CD4-positive, alpha-beta memory T cell (primary cell): ENCODE measurements at regions of chr12 and their contacts with region 1.

Region 1: DNA sequence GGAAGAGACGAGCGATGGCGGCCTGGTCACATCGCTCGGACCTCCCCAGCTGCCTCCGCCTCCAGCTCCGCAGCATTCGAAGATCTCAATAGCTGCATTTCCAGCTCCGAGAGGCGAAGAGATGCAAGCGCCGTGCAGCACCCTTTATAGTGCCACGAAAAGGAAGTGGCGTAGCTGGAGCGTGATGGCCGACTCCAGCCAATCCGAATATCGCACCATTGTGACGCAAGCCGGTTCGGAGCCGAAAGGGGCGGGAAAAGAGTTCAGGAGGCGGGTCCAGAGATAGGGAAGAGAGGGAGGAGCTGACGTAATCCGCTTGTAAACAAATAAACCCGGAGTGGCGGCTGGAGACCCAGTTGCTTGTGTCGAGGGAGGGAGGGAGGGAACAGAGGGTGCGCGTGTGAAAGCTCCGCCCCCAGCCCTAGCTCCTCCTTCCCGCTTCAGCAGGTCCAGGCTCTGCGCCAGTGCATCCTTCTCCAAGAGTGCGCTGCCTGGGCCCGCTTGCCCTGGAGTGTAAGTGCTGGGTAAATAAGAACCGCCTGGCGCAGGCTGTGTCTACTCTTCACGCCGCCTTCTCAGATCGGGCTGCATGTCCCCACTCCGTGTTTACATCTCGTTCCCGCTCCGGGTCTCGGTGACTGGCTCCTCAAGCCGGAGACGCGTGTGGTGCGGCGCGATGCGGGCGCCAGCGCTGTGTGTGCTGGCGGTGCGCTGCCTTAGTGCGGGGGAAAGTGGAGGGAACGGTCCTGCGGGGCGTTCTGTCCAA is at the start of gene BTG1:
- DNase-seq: peak; percentile 99 to 100 (median 100)
- H3K4me3 ChIP-seq: peak within 1 kb of the TSS; percentile 89 to 96
- H3K4me3 Mint-ChIP-seq: peak within 1 kb of the TSS; percentile 92 to 100 (median 100)
- H3K27ac ChIP-seq: peak within 1 kb of the TSS; percentile 86
- H3K27ac Mint-ChIP-seq: peak within 1 kb of the TSS; percentile 95 to 100 (median 100)
- H3K4me1 ChIP-seq: peaks cover 23% of the 10 kb centered on the region
- H3K4me1 Mint-ChIP-seq: peaks cover 9 to 37% (median 21%) of the 10 kb centered on the region in 4 donors
- H3K27me3 ChIP-seq: no peaks in the 10 kb centered on the region
- H3K27me3 Mint-ChIP-seq: no peaks in the 10 kb centered on the region
- total RNA-seq, gene BTG1: 431 to 469 TPM

Region 2: GRCh38 chr12:91811481-91812287 is 334.2 kb before region 1 on chr12:
- CTCF ChIA-PET with region 1: interaction called, 44 read pairs
- POLR2A ChIA-PET with region 1: interaction called, 99 read pairs
- intact Hi-C with region 1: loop called (anchors 1 kb)
- DNase-seq: peak; percentile 64 to 73 (median 67)
- H3K4me3 ChIP-seq: no peak overlapping the region
- H3K4me3 Mint-ChIP-seq: peak overlapping the region in 5 of 8 donors; percentile 2 to 57 (median 44)
- H3K27ac ChIP-seq: no peak overlapping the region
- H3K27ac Mint-ChIP-seq: peak overlapping the region; percentile 7 to 92 (median 84)
- H3K4me1 ChIP-seq: peaks cover 8% of the 10 kb centered on the region
- H3K4me1 Mint-ChIP-seq: peaks cover 4 to 13% (median 12%) of the 10 kb centered on the region in 4 donors
- H3K27me3 ChIP-seq: no peaks in the 10 kb centered on the region
- H3K27me3 Mint-ChIP-seq: no peaks in the 10 kb centered on the region

Region 3: DNA sequence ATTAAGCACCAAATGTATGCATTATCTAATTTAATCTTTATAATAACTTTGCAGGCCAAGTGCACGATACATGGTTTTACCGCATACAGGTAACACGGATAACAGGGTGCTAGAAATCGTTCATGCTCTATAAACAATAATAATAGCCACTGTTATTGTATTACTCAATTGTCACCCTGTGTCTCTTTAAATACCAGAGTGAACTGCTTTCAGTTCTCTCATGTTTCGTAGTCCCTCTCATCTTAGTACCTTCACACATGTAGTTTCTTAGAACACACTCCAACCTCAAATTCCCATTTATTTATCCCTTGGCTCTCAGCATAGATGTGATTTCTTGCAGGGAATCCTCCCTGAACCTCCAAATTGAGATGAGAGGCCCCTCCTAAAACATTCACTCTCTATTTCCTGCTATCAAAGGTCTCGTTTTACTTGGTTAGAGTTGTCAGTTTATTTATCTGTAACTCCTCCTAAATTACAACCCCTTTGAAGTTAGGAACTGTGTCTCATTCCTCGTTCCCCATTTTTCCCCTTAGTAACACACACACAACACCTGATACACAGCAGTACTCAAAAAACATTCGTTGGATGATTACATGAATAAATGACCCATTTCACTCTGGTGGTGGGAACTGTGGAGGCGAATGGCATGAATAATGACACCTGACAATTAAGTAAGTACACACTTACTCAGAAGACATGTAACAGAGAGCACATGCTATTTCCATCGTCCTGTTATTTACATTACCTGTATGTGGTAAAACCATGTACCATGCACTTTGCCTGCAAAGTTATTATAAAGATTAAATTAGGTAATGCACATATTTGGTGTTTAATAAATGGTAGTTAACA is 134.8 kb before region 1 on chr12:
- CTCF ChIA-PET with region 1: interaction called, 16 read pairs
- POLR2A ChIA-PET with region 1: interaction called, 84 read pairs
- intact Hi-C with region 1: no loop called
- DNase-seq: no peak
- H3K4me3 ChIP-seq: no peak overlapping the region
- H3K4me3 Mint-ChIP-seq: peak overlapping the region; percentile 36 to 90 (median 80)
- H3K27ac ChIP-seq: peak overlapping the region; percentile 32
- H3K27ac Mint-ChIP-seq: peak overlapping the region; percentile 22 to 93 (median 85)
- H3K4me1 ChIP-seq: peaks cover 23% of the 10 kb centered on the region
- H3K4me1 Mint-ChIP-seq: peaks cover 31 to 51% (median 37%) of the 10 kb centered on the region in 4 donors
- H3K27me3 ChIP-seq: no peaks in the 10 kb centered on the region
- H3K27me3 Mint-ChIP-seq: no peaks in the 10 kb centered on the region

Region 4: GRCh38 chr12:92078167-92079053 is 67.5 kb before region 1 on chr12:
- CTCF ChIA-PET with region 1: no interaction called
- POLR2A ChIA-PET with region 1: interaction called, 17 read pairs
- intact Hi-C with region 1: no loop called
- DNase-seq: no peak
- H3K4me3 ChIP-seq: no peak overlapping the region
- H3K4me3 Mint-ChIP-seq: peak overlapping the region in 2 of 8 donors; percentile 7 to 20
- H3K27ac ChIP-seq: no peak overlapping the region
- H3K27ac Mint-ChIP-seq: peak overlapping the region in 4 of 7 donors; percentile 7 to 69 (median 56)
- H3K4me1 ChIP-seq: peaks cover 32% of the 10 kb centered on the region
- H3K4me1 Mint-ChIP-seq: peaks cover 36 to 73% (median 56%) of the 10 kb centered on the region in 4 donors
- H3K27me3 ChIP-seq: no peaks in the 10 kb centered on the region
- H3K27me3 Mint-ChIP-seq: no peaks in the 10 kb centered on the region

Region 5: DNA sequence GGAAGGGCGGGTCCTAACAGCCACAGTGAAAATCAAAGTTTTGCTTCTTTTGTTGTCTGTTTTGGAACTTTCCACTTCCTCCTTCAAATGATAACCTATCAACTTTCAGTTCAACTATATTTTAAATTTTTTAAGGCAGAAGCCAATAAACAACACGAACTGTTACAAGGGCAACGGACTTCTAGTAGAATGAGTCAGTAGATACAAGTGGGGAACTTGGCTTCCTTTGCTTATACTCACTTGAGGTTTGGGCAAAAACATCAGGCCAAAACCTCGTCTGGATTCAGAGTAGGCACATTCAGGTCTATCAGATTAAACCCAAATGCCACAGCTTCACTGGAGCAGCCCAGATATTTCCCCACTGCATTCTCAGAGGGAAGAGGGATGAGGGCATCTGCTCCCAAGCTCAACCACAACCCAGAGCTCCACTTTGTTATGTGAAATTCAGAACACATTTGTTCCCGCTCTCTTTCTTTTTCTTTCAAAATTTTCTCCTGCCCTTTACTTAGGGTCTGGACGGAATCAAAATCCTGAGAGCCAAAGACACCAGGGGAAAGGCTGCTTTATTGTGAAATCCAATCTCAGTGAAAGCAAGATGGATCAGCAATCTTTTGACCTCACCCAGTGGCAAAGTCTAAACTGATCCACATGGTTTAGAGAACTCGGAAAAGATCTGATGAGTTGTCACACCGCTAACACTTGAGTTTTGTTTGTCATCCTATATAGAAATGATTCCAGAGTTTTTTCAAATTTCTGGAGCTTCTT is 152.2 kb after region 1 on chr12:
- CTCF ChIA-PET with region 1: interaction called, 3 read pairs
- POLR2A ChIA-PET with region 1: interaction called, 47 read pairs
- intact Hi-C with region 1: loop called (anchors 2 kb)
- DNase-seq: peak in 4 of 5 donors; percentile 33 to 49 (median 46)
- H3K4me3 ChIP-seq: no peak overlapping the region
- H3K4me3 Mint-ChIP-seq: peak overlapping the region; percentile 28 to 78 (median 72)
- H3K27ac ChIP-seq: no peak overlapping the region
- H3K27ac Mint-ChIP-seq: peak overlapping the region in 5 of 7 donors; percentile 76 to 93 (median 93)
- H3K4me1 ChIP-seq: peaks cover 40% of the 10 kb centered on the region
- H3K4me1 Mint-ChIP-seq: peaks cover 21 to 33% (median 28%) of the 10 kb centered on the region in 4 donors
- H3K27me3 ChIP-seq: no peaks in the 10 kb centered on the region
- H3K27me3 Mint-ChIP-seq: no peaks in the 10 kb centered on the region

Region 6: DNA sequence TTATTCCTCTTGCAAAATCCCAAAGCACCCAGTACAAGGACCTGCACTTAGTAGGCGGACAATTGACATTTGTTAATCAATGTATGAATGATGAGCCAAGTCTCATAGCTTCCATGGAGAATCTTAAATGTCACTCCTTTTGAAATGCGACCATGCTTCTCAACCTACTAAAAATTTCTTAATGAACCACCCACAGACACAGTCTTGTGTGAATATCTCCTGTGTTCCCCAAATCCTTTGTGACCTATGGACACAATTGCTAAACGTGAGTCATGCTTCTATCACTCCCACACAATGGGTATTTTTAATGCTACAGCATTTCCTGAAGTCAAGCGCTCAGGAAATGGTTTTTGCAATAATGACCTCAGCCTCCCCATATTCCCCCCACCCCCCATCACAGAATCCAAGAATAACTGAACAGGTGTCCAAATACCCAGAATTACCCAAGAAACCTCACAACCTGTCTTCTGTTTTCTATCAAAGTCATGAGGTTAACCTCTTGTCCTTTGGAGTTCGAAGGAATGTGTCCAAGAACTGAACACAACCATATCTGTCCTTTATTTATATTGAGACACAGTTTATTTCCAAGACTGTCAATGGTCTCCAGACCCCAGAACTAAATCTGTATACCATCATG is 393.3 kb after region 1 on chr12:
- CTCF ChIA-PET with region 1: no interaction called
- POLR2A ChIA-PET with region 1: interaction called, 33 read pairs
- intact Hi-C with region 1: no loop called
- DNase-seq: peak in 1 of 5 donors; percentile 11
- H3K4me3 ChIP-seq: no peak overlapping the region
- H3K4me3 Mint-ChIP-seq: peak overlapping the region in 6 of 8 donors; percentile 4 to 87 (median 67)
- H3K27ac ChIP-seq: peak overlapping the region; percentile 27
- H3K27ac Mint-ChIP-seq: peak overlapping the region; percentile 76 to 96 (median 92)
- H3K4me1 ChIP-seq: peaks cover 54% of the 10 kb centered on the region
- H3K4me1 Mint-ChIP-seq: peaks cover 34 to 74% (median 61%) of the 10 kb centered on the region in 4 donors
- H3K27me3 ChIP-seq: no peaks in the 10 kb centered on the region
- H3K27me3 Mint-ChIP-seq: no peaks in the 10 kb centered on the region

Region 7: DNA sequence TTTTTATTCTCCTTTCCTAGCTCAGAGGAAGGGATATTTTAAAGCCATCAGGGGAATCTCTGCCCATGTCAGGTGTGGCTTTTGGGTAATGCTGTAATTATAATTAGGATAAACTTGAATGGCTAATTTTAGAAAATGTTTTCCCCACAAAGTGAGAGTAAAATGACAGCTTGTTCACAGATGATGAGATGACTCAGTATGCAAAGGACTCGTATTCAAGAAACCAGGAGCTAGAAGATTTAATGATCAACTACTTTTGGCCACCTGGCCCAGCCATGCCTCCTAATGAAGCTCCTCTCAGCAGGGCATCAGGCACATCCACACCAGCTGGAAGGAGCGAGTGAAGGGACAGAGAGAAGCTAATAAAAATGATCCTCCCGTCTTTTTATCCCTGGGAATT is 527.8 kb after region 1 on chr12:
- CTCF ChIA-PET with region 1: no interaction called
- POLR2A ChIA-PET with region 1: no interaction called
- intact Hi-C with region 1: no loop called
- DNase-seq: no peak
- H3K4me3 ChIP-seq: no peak overlapping the region
- H3K4me3 Mint-ChIP-seq: no peak overlapping the region
- H3K27ac ChIP-seq: no peak overlapping the region
- H3K27ac Mint-ChIP-seq: no peak overlapping the region
- H3K4me1 ChIP-seq: no peaks in the 10 kb centered on the region
- H3K4me1 Mint-ChIP-seq: no peaks in the 10 kb centered on the region
- H3K27me3 ChIP-seq: no peaks in the 10 kb centered on the region
- H3K27me3 Mint-ChIP-seq: peaks cover 1 to 8% of the 10 kb centered on the region in 2 donors